ENCODE measurements at regions of chr9 and their contacts with region 1.

Region 1: GRCh38 chr9:125521462-125522327 is 185.3 kb downstream of the MAPKAP1 start:
- DNase-seq: peak; percentile 63
- ATAC-seq: peak; percentile 97
- H3K4me3 Mint-ChIP-seq: peak overlapping the region; percentile 27
- H3K27ac Mint-ChIP-seq: peak overlapping the region; percentile 86
- H3K4me1 Mint-ChIP-seq: peaks cover 44% of the 10 kb centered on the region
- H3K27me3 Mint-ChIP-seq: no peaks in the 10 kb centered on the region

Region 2: DNA sequence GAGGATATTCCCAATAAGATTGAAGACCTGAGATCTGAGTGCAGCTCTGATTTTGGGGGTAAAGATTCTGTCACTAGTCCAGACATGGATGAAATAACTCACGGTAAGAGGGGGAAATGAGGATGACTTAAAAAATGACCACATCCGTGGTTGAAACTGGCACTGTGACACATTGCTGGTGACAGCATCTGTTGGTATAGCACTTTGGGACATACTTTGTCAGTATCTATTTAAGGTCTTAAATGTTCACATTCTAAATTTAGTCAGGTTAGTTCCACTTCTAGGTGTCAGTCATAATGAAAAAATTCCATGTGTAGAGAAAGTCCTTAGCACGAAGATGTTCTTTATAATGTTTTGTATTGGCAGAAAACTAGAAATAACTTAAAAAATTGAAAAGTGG is 189.2 kb before region 1 on chr9:
- CTCF ChIA-PET with region 1: no interaction called
- POLR2A ChIA-PET with region 1: no interaction called
- intact Hi-C with region 1: loop called in 1 of 2 experiments (anchors 5 kb)
- DNase-seq: peak; percentile 68
- ATAC-seq: peak; percentile 95
- H3K4me3 Mint-ChIP-seq: no peak overlapping the region
- H3K27ac Mint-ChIP-seq: peak overlapping the region; percentile 51
- H3K4me1 Mint-ChIP-seq: peaks cover 16% of the 10 kb centered on the region
- H3K27me3 Mint-ChIP-seq: no peaks in the 10 kb centered on the region

Region 3: DNA sequence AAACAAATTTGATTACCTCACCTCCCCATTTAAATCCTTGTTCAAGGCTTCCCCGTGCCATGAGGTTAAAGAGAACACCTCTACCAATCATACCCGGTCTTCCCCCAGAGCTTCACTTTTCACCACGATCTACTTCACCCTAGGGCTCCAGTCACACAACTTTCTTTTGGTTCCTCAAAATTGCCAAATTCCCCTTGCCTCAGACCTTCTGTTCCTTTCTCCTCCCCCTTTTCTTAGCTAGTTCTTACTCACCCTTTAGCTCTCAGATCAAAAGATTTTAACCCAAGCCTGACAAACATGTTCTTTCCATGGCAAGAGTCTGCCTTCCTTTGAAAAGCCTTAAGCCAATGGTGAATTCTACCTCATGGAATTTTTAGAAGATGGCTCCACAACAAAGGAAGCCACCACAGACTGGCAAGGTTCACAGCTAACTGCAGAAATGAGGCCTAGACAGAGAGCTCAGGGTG is 128.6 kb after region 1 on chr9:
- CTCF ChIA-PET with region 1: interaction called, 5 read pairs
- POLR2A ChIA-PET with region 1: interaction called, 4 read pairs
- intact Hi-C with region 1: loop called (anchors 1 to 5 kb)
- DNase-seq: peak; percentile 39
- ATAC-seq: peak; percentile 89
- H3K4me3 Mint-ChIP-seq: peak overlapping the region; percentile 55
- H3K27ac Mint-ChIP-seq: peak overlapping the region; percentile 87
- H3K4me1 Mint-ChIP-seq: peaks cover 71% of the 10 kb centered on the region
- H3K27me3 Mint-ChIP-seq: no peaks in the 10 kb centered on the region

Region 4: DNA sequence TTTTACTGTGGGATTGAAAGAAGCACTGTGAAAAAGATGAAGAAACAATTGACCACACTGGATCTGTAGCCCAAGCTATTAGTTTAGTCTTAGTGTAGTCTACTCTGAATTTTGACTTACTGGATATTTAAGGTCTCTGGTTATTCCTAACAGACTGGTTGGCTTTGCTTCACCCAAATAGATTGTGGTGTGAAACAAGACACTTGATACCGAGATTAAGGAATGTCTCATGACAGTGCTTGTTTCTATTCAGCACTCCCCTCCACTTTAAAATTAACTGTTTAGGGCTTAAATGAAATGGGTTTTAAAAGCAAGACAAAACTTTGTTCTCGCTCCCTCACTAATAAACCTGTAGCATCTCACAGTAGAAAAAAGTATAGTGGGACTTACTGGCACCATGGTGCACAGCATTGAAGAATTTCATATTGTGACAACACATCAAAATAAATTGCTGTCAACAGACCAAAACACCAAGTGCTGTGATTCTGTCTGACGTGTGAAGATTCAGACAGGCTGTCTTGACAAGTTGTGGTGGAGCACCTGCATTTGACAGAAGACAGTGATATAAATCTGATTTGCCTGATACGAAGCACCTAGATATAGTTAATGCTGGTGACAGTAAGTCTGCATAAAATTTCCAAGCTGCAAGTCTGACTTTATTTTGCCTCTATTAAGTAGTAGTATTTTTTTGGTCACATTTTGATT is 298.6 kb after region 1 on chr9:
- CTCF ChIA-PET with region 1: no interaction called
- POLR2A ChIA-PET with region 1: no interaction called
- intact Hi-C with region 1: loop called in 1 of 2 experiments (anchors 5 kb)
- DNase-seq: no peak
- ATAC-seq: no peak
- H3K4me3 Mint-ChIP-seq: no peak overlapping the region
- H3K27ac Mint-ChIP-seq: peak overlapping the region; percentile 8
- H3K4me1 Mint-ChIP-seq: peaks cover 30% of the 10 kb centered on the region
- H3K27me3 Mint-ChIP-seq: no peaks in the 10 kb centered on the region

Region 5: DNA sequence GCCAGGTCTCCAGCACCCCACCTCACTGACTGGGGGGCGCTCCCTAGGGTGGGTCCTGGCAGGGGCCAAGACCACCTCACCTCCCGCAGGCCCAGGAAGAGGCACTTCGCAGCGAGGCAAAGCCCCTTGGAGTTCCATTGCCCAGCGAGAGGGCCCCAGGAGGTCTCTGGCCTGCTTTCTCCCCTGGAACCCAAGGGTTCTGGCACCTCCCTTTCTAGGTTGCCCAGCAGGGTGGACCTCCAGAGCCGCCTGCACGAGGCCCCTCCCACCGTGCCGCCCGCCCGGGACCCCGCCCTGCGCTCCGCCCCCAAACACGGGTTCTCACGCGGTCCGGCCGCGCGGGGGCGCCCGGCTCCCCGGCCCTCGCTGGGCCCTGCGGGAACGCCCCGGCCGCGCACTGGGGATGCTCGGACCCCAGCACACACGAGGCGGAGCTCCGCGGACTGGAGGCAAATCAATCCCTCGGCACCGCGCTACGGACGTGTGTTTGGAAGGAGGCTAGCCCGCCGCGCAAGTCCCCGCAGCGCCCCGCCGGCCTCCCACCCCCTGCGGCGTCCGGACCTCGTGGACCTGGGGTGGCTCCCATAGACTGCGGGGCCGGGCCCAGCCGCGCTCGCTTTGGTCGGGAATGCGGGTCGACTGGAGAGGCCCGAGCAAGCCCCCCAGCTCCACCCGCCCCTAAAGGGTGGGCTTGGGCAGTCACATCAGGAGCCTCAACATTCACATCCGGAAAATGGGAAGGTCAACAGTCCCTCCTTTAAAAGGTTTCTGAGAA is 992.5 kb after region 1 on chr9:
- CTCF ChIA-PET with region 1: no interaction called
- POLR2A ChIA-PET with region 1: no interaction called
- intact Hi-C with region 1: loop called in 1 of 2 experiments (anchors 2 kb)
- DNase-seq: peak; percentile 76
- ATAC-seq: peak; percentile 50
- H3K4me3 Mint-ChIP-seq: no peak overlapping the region
- H3K27ac Mint-ChIP-seq: no peak overlapping the region
- H3K4me1 Mint-ChIP-seq: peaks cover 28% of the 10 kb centered on the region
- H3K27me3 Mint-ChIP-seq: peaks cover 66% of the 10 kb centered on the region